Esophagus muscularis mucosa (tissue), 4 donors: ENCODE measurements at regions of chr2 and their contacts with region 1.

Region 1: GRCh38 chr2:1854729-1855547 is 110.6 kb upstream of the PXDN start:
- DNase-seq: no peak
- H3K4me3 ChIP-seq: peak overlapping the region in 1 of 4 donors; percentile 20
- H3K27ac ChIP-seq: no peak overlapping the region
- H3K4me1 ChIP-seq: peaks cover 0 to 11% (median 10%) of the 10 kb centered on the region in 4 donors
- H3K27me3 ChIP-seq: peaks cover 0 to 44% (median 0%) of the 10 kb centered on the region in 4 donors
- CTCF ChIP-seq: peak; percentile 19 to 58 (median 24)
- EP300 ChIP-seq: no peak
- POLR2A ChIP-seq: no peak

Region 2: DNA sequence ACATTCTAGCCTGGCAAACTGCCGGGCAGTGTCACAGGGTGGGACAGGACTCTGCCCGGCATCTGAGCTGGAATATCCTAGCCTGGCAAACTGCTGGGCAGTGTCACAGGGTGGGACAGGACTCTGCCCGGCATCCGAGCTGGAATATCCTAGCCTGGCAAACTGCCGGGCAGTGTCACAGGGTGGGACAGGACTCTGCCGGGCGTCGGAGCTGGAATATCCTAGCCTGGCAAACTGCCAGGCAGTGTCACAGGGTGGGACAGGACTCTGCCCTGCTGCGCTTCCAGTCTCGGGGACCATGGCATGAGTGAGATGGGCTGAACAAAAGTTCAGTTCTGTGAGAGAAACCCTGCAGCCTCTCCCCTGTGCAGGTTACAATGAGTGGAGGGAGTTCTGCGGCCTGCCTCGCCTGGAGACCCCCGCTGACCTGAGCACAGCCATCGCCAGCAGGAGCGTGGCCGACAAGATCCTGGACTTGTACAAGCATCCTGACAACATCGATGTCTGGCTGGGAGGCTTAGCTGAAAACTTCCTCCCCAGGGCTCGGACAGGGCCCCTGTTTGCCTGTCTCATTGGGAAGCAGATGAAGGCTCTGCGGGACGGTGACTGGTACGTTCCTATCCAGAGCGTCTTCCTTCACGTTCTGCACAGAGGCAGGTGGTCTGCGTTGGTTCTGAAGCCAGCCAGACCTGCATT is 361.4 kb before region 1 on chr2:
- intact Hi-C with region 1: no loop called
- DNase-seq: no peak
- H3K4me3 ChIP-seq: no peak overlapping the region
- H3K27ac ChIP-seq: no peak overlapping the region
- H3K4me1 ChIP-seq: peaks cover 0 to 4% (median 0%) of the 10 kb centered on the region in 4 donors
- H3K27me3 ChIP-seq: peaks cover 0 to 6% (median 0%) of the 10 kb centered on the region in 4 donors
- CTCF ChIP-seq: no peak
- EP300 ChIP-seq: no peak
- POLR2A ChIP-seq: no peak

Region 3: GRCh38 chr2:2146969-2147900 is 292.3 kb after region 1 on chr2:
- intact Hi-C with region 1: no loop called
- DNase-seq: no peak
- H3K4me3 ChIP-seq: no peak overlapping the region
- H3K27ac ChIP-seq: no peak overlapping the region
- H3K4me1 ChIP-seq: no peaks in the 10 kb centered on the region
- H3K27me3 ChIP-seq: peaks cover 0 to 19% (median 0%) of the 10 kb centered on the region in 4 donors
- CTCF ChIP-seq: no peak
- EP300 ChIP-seq: no peak
- POLR2A ChIP-seq: no peak

Region 4: GRCh38 chr2:3303583-3304406 is 1448.9 kb after region 1 on chr2:
- intact Hi-C with region 1: loop called (anchors 10 kb)
- DNase-seq: peak; percentile 96
- H3K4me3 ChIP-seq: peak overlapping the region; percentile 27 to 40 (median 32)
- H3K27ac ChIP-seq: no peak overlapping the region
- H3K4me1 ChIP-seq: peaks cover 5 to 7% (median 6%) of the 10 kb centered on the region in 4 donors
- H3K27me3 ChIP-seq: no peaks in the 10 kb centered on the region
- CTCF ChIP-seq: peak; percentile 92 to 98 (median 98)
- EP300 ChIP-seq: no peak
- POLR2A ChIP-seq: no peak